ENCODE measurements at regions of chr17 and their contacts with region 1.

Region 1: GRCh38 chr17:63621766-63622519 is at the start of gene MAP3K3:
- DNase-seq: peak; percentile 98 to 100 (median 100)
- H3K4me3 ChIP-seq: peak within 1 kb of the TSS; percentile 59 to 99 (median 83)
- H3K27ac ChIP-seq: peak within 1 kb of the TSS; percentile 50 to 97 (median 90)
- H3K27me3 ChIP-seq: no peaks in the 10 kb centered on the region
- CTCF ChIP-seq: peak in 35 of 56 donors; percentile 11 to 58 (median 31)
- total RNA-seq, gene MAP3K3: 24.2 to 55.3 (median 37.6) TPM

Region 2: GRCh38 chr17:63549946-63550807 is 71.8 kb before region 1 on chr17 and contains the start of gene DCAF7:
- intact Hi-C with region 1: loop called (anchors 5 kb)
- DNase-seq: peak; percentile 98 to 100 (median 100)
- H3K4me3 ChIP-seq: peak within 1 kb of the TSS; percentile 62 to 100 (median 97)
- H3K27ac ChIP-seq: peak within 1 kb of the TSS; percentile 63 to 96 (median 91)
- H3K27me3 ChIP-seq: no peaks in the 10 kb centered on the region
- CTCF ChIP-seq: peak in 20 of 56 donors; percentile 9 to 47 (median 26)
- total RNA-seq, gene DCAF7: 51.7 to 77.3 (median 64.0) TPM

Region 3: GRCh38 chr17:63697341-63698286 is 75.7 kb after region 1 on chr17:
- intact Hi-C with region 1: loop called (anchors 2 to 5 kb)
- DNase-seq: no peak
- H3K4me3 ChIP-seq: peak overlapping the region in 27 of 59 donors; percentile 8 to 72 (median 61)
- H3K27ac ChIP-seq: peak overlapping the region in 51 of 59 donors; percentile 19 to 95 (median 67)
- H3K27me3 ChIP-seq: no peaks in the 10 kb centered on the region
- CTCF ChIP-seq: peak in 40 of 56 donors; percentile 8 to 46 (median 24)

Region 4: DNA sequence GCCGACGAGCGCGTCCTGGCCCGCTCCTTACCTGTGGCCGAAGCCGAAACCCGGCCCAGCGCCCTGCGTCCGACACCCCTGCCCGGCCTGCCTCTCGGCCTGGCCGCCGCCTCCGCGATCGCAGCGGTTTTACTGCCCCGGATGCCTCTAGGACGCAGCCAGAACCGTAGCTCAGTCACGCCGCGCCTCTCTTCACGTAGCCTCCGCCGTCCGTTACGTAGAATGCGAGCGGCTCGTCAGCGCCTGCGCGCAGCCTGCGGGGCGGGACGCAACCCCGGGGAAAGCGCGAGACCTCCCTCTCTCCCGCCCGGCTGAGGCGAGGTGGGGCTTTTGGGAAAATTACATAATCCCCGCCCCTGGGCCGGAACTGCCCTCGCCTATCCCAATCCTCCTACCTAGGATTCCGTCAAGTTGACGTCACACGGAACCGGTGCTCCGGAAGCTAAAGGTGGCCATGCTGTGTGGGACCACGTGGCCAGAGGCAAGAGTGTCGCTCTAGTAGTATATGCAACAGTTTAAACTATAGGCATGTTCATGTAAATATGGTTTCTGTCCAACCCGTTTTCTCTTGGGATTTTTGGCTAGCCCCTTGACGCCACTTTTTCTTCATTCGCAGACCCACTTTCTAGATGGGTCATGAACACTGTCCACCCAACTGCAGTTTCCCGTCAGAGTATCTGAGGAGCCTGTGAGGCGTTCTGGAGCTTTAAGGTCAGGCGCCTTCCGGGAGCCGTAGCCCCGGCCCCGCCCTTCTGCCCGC is 151.6 kb after region 1 on chr17 and contains the start of gene CCDC47:
- intact Hi-C with region 1: loop called in 1 of 2 experiments (anchors 5 kb)
- DNase-seq: peak; percentile 98 to 100 (median 100)
- H3K4me3 ChIP-seq: peak within 1 kb of the TSS; percentile 78 to 100 (median 95)
- H3K27ac ChIP-seq: peak within 1 kb of the TSS; percentile 86 to 99 (median 96)
- H3K27me3 ChIP-seq: no peaks in the 10 kb centered on the region
- CTCF ChIP-seq: peak in 12 of 56 donors; percentile 3 to 36 (median 16)
- total RNA-seq, gene CCDC47: 60.4 to 109 (median 83.6) TPM

Region 5: DNA sequence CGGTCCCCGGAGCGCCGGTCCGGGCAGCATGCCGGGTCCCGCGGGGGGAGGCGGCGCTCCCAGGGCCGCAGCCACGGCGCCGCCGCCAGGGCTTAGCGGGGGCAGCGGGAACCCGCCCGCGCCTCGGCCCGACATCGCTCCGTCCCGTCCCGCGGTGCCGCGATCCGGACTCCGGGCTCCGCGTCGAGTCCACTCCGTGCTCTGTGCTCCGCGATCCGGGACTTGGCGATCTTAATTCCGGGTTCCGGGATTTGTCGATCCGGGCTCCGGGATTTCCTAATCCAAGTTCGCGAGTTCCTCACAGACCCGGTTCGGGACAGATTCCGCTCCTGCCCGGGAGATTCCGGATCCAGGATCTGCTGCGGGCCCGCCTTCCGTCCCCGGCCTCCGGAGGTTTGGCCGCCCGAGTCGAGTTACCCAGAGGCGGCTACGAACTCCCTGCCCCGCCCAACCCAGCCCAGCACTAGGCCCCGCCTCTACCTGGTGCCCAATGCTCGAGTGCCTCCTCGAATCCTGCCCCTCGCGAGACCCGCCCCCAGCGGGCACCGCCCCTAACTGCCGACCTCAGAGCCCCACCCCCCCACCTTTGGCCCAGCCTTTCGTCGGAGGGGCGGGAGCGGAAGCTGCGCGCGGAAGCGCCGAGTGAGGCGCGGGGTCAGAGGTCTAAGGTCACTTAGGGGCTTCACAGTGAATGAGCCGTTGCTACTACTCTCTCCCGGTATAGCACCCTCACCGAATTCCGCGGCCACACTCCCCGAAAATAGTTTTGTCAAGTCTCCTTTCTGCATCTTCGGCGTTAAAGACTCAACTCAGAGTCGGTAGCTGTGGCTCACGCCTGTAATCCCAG is 220.8 kb after region 1 on chr17 and contains the start of gene SMARCD2:
- intact Hi-C with region 1: loop called (anchors 5 to 10 kb)
- DNase-seq: peak; percentile 94 to 99 (median 97)
- H3K4me3 ChIP-seq: peak within 1 kb of the TSS; percentile 61 to 98 (median 88)
- H3K27ac ChIP-seq: peak within 1 kb of the TSS; percentile 51 to 100 (median 98)
- H3K27me3 ChIP-seq: no peaks in the 10 kb centered on the region
- CTCF ChIP-seq: peak in 26 of 56 donors; percentile 7 to 52 (median 18)
- total RNA-seq, gene SMARCD2: 20.4 to 70.8 (median 40.0) TPM

Region 6: GRCh38 chr17:64448665-64449512 is 826.9 kb after region 1 on chr17 and contains the start of gene MILR1:
- intact Hi-C with region 1: no loop called
- DNase-seq: no peak
- H3K4me3 ChIP-seq: peak within 1 kb of the TSS in 28 of 59 donors; percentile 0 to 45 (median 27)
- H3K27ac ChIP-seq: peak within 1 kb of the TSS in 25 of 59 donors; percentile 2 to 73 (median 38)
- H3K27me3 ChIP-seq: no peaks in the 10 kb centered on the region
- CTCF ChIP-seq: no peak
- total RNA-seq, gene MILR1: 1.1 to 16.6 (median 4.9) TPM